ENCODE measurements at regions of chr20 and their contacts with region 1.

Region 1: GRCh38 chr20:23350196-23350903 is at the start of gene NXT1:
- DNase-seq: peak; percentile 96
- H3K4me3 Mint-ChIP-seq: peak within 1 kb of the TSS; percentile 77
- H3K27ac Mint-ChIP-seq: peak within 1 kb of the TSS; percentile 100
- H3K4me1 Mint-ChIP-seq: peaks cover 36% of the 10 kb centered on the region
- H3K27me3 Mint-ChIP-seq: no peaks in the 10 kb centered on the region
- total RNA-seq, gene NXT1: 31.9 to 36.9 TPM

Region 2: GRCh38 chr20:23200918-23201317 is 149.4 kb before region 1 on chr20:
- CTCF ChIA-PET with region 1: no interaction called
- intact Hi-C with region 1: no loop called
- DNase-seq: peak; percentile 11
- H3K4me3 Mint-ChIP-seq: no peak overlapping the region
- H3K27ac Mint-ChIP-seq: no peak overlapping the region
- H3K4me1 Mint-ChIP-seq: no peaks in the 10 kb centered on the region
- H3K27me3 Mint-ChIP-seq: peaks cover 6% of the 10 kb centered on the region

Region 3: DNA sequence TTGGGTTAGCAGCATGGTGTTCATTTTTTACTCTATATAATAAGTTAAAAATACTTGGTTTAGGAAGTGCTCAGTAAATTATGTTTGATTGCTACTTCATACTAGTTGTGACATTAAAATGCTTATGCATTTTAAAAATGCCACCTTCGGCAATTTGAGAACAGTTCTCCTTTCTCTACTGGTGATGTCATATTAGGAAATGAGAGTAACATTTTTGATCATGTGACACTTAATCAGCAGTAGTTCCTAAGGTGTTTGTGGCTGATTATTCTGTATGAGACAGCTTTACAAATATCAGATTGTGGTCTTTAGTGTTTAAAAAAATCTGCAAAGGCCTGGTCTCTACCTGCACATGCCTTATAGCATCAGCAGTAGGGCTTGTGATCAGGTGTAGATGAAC is 16.0 kb after region 1 on chr20:
- CTCF ChIA-PET with region 1: interaction called, 8 read pairs
- intact Hi-C with region 1: loop called (anchors 1 kb)
- DNase-seq: no peak
- H3K4me3 Mint-ChIP-seq: peak overlapping the region; percentile 34
- H3K27ac Mint-ChIP-seq: peak overlapping the region; percentile 56
- H3K4me1 Mint-ChIP-seq: peaks cover 48% of the 10 kb centered on the region
- H3K27me3 Mint-ChIP-seq: no peaks in the 10 kb centered on the region

Region 4: DNA sequence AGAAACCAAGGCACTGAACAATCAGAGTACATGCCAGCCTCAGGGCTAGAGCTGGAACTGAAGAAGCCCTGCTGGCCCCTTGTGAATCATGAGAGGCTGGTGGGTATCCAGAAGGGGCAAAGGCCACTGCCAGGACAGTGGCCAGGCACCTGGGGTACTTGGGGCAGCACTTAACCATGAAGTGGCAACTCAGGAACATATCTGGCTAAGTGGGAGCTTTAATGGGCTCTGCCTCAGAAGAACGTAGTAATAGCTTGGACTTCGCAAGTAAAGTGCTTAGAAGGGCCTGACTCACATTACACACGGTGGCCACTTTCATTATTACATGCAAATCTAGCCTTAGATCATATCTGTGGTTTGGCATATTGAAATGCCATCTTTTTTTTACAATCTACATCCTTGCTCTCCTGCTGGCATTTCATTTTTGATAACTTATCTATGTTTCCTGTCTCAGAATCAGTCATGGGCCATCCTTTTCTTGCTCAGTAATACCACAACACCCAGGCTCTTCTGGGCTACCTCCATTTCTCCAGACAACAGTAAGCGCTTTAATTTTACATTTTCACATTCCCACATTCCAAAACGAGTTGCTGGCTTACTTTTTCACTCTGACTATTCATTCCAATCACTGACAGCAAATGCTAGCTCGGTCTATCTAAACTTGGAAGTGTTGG is 49.4 kb after region 1 on chr20:
- CTCF ChIA-PET with region 1: no interaction called
- intact Hi-C with region 1: loop called (anchors 1 kb)
- DNase-seq: peak; percentile 15
- H3K4me3 Mint-ChIP-seq: no peak overlapping the region
- H3K27ac Mint-ChIP-seq: no peak overlapping the region
- H3K4me1 Mint-ChIP-seq: peaks cover 27% of the 10 kb centered on the region
- H3K27me3 Mint-ChIP-seq: no peaks in the 10 kb centered on the region

Region 5: DNA sequence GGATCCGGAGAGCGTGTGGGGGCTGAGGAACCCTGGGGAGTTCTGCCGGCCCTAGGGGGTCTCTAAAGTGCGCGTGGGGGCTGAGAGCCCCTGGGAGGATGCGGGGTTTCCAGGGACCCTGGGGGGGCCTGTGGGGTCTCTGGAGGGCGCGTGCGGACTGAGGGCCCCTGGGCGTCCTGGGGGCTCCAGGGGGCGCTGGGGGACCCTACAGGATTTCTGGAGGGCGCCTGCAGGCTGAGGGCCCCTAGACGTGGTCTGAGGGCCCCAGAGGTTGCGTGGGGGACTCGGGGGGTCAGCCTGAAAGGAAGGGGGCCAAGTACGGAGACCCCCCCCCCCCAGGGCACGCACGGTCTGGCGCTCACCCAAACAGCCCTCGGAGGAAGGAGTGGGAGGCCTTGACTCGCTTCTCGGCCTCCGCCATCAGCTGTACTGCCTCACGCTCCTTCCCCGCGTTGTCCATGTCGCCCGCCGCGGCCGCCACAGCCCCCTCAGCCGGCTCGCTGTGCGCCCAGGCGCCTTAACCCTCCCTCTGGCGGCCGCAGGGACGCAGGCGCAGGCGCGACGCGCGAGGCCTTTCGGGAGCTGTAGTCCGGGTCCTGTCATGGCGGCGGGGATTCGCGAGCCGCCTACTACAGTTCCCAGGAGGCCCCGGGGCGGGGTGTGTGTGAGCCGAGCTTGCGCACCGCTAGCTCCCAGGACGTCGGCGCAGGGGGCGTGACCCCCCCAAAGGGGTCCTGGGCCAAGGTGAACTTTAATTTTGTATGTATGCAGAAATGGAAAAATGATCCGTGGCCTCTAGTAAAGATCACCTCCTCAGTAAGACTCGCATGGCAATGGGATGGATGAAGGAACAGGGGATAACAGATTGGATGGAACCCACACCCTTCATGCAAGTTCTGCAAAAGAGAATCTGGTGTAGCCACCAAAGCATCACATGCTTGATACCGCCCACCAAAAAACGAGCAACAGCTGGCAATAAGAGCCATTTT is 70.9 kb after region 1 on chr20 and contains the start of gene NAPB:
- CTCF ChIA-PET with region 1: interaction called, 17 read pairs
- intact Hi-C with region 1: loop called (anchors 1 kb)
- DNase-seq: peak; percentile 94
- H3K4me3 Mint-ChIP-seq: peak within 1 kb of the TSS; percentile 81
- H3K27ac Mint-ChIP-seq: no peak within 1 kb of the TSS
- H3K4me1 Mint-ChIP-seq: peaks cover 24% of the 10 kb centered on the region
- H3K27me3 Mint-ChIP-seq: peaks cover 5% of the 10 kb centered on the region
- total RNA-seq, gene NAPB: 5.4 to 7.6 TPM

Region 6: GRCh38 chr20:23441850-23442313 is 91.5 kb after region 1 on chr20:
- CTCF ChIA-PET with region 1: interaction called, 3 read pairs
- intact Hi-C with region 1: loop called (anchors 1 kb)
- DNase-seq: peak; percentile 80
- H3K4me3 Mint-ChIP-seq: no peak overlapping the region
- H3K27ac Mint-ChIP-seq: no peak overlapping the region
- H3K4me1 Mint-ChIP-seq: no peaks in the 10 kb centered on the region
- H3K27me3 Mint-ChIP-seq: no peaks in the 10 kb centered on the region

Region 7: GRCh38 chr20:23606652-23607049 is 256.3 kb after region 1 on chr20:
- CTCF ChIA-PET with region 1: no interaction called
- intact Hi-C with region 1: loop called (anchors 2 kb)
- DNase-seq: peak; percentile 77
- H3K4me3 Mint-ChIP-seq: no peak overlapping the region
- H3K27ac Mint-ChIP-seq: no peak overlapping the region
- H3K4me1 Mint-ChIP-seq: no peaks in the 10 kb centered on the region
- H3K27me3 Mint-ChIP-seq: peaks cover 6% of the 10 kb centered on the region